OCI-LY7 (cell line): ENCODE measurements at regions of chr2 and their contacts with region 1.

Region 1: DNA sequence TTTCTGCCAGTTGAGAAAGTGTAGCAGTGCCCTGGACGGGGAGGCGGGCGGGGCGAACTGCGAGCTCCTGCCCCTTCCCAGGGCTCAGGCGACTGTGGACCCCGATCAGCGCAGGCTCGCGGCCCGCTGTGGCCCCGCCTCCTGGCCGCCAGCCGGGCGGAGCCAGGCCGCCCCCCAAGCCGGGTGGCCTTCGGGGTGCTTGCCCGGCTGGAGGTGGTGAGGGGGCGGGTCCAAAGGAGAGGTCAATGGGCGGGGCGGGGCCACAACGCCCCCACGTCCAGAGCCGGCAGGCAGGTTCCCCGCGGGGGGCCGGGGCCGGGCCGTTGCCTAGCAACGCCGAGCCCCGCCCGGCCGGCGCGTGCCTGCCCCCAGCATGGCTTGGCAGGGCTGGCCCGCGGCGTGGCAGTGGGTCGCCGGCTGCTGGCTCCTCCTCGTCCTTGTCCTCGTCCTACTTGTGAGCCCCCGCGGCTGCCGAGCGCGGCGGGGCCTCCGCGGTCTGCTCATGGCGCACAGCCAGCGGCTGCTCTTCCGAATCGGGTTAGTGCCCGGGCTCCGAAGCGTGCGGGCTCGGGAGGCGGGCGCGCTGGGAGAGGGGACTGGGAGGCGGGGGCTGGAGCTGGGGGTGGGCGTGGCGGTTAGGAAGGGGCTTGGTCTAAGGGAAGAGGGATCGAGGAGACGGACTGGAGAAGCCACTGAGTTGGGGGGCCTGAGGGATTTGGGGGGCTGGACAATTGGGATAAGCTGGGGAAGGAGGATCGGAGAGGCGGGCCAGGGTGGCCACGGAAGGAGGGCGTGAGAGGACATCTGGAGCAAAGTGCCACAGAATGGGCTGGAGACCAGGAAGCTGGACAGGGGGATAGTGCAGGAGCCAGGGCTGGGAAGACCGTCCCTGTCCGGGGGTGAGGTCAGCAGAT is 30.8 kb upstream of the TMBIM1 start:
- DNase-seq: peak; percentile 78
- H3K4me3 ChIP-seq: peak overlapping the region; percentile 76
- H3K27ac ChIP-seq: peak overlapping the region; percentile 59
- H3K4me1 ChIP-seq: peaks cover 76% of the 10 kb centered on the region
- CTCF ChIP-seq: no peak

Region 2: DNA sequence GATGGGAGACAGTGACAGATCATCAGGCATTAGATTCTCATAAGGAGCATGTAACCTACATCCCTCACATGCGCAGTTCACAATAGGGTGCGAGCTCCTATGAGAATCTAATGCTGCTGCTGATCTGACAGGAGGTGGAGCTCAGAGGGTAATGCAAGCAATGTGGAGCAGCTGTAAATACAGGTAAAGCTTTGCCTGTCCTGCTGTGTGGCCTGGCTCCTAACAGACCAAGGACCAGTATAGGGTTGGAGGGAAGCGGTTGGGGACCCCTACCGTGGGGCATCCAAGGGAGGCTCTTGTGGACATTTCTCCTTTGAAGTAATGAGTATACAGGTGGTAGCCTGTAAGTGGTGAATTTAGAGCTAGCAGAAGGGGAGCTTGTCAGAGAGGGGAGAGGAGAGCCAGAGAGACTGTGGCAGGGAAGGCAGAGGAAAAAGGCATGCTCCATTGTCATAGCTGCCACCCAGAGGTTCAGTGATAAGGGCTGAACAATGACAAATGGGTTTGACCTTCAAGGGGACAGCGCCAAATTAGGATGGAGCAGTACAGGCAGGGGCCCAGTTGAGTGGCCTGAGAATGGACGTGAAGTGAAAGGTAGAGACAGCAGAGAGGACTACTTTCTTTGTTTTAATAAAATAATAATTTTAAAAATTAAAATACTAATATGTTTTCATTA is 15.6 kb before region 1 on chr2:
- CTCF ChIA-PET with region 1: interaction called, 9 read pairs
- POLR2A ChIA-PET with region 1: interaction called, 10 read pairs
- intact Hi-C with region 1: no loop called
- DNase-seq: no peak
- H3K4me3 ChIP-seq: no peak overlapping the region
- H3K27ac ChIP-seq: no peak overlapping the region
- H3K4me1 ChIP-seq: peaks cover 27% of the 10 kb centered on the region
- CTCF ChIP-seq: no peak

Region 3: DNA sequence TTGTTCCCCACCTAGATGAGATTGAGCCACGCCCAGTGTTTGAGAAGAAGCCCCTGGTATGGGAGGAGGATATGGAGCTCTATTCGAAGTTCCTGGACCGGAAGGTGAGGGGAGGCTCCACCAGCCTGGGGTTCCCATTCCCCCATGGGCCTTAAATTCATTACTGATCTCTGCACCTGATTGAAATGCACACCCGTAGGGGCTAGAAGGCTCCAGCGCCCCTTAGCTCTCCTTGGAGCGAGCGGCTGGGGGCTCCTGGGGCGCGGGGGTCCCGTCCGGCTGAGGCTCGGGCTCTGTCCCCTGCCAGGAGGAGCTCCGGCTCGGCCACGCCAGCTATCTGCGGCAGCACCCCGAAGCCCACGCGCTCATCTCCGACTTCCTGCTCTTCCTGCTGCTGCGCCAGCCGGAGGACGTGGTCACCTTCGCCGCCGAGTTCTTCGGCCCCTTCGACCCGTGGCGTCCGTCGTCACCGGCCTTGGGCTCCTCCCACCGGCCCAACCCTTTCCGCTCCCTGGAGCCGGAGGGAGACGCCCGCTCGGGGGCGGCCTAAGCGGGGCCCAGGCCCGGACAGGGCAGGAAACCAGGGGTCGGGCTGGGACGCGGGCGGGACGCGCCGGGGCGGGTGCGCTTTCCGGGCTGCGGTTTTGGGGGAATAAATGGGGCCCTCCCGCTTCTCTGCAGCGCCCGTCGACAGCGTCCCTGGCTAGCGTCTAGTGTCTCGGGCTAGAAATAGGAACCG is 44.4 kb after region 1 on chr2:
- CTCF ChIA-PET with region 1: no interaction called
- POLR2A ChIA-PET with region 1: interaction called, 11 read pairs
- intact Hi-C with region 1: no loop called
- DNase-seq: peak; percentile 81
- H3K4me3 ChIP-seq: peak overlapping the region; percentile 68
- H3K27ac ChIP-seq: peak overlapping the region; percentile 40
- H3K4me1 ChIP-seq: peaks cover 66% of the 10 kb centered on the region
- CTCF ChIP-seq: peak; percentile 31; the same call in 1 of the 2 replicates

Region 4: DNA sequence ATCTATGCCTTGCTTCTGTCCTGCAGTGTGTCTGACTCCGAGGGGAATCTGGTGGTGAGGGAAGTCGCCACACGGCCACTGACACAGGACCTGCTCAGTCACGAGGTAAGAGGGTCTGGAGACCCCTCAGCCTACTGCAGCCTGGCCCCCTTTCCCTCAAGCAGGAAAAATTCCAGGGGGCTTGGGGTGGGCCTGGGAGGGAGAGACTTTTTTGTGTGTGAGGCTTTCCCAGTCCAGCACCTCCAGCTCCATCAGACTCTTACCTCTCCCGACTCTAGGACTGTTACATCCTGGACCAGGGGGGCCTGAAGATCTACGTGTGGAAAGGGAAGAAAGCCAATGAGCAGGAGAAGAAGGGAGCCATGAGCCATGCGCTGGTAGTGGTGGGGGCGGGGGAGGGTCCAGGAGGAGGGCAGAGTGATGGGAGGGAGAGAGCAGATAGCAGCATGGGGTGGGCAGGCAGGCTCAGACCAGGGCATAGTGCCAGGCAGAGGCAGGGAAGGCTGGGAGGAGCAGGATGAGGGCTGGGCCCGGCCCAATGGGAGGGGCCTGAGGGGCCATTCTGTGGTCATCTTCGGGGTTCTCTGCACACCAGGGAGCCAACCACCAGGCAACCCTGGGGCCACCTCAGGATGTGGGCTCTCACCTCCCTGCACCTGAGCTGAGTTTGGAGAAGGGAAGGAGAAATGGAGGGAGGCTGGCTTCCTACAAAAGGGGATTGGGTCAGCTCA is 106.6 kb after region 1 on chr2:
- CTCF ChIA-PET with region 1: no interaction called
- POLR2A ChIA-PET with region 1: no interaction called
- intact Hi-C with region 1: no loop called
- DNase-seq: no peak
- H3K4me3 ChIP-seq: no peak overlapping the region
- H3K27ac ChIP-seq: no peak overlapping the region
- H3K4me1 ChIP-seq: no peaks in the 10 kb centered on the region
- CTCF ChIP-seq: no peak

Region 5: DNA sequence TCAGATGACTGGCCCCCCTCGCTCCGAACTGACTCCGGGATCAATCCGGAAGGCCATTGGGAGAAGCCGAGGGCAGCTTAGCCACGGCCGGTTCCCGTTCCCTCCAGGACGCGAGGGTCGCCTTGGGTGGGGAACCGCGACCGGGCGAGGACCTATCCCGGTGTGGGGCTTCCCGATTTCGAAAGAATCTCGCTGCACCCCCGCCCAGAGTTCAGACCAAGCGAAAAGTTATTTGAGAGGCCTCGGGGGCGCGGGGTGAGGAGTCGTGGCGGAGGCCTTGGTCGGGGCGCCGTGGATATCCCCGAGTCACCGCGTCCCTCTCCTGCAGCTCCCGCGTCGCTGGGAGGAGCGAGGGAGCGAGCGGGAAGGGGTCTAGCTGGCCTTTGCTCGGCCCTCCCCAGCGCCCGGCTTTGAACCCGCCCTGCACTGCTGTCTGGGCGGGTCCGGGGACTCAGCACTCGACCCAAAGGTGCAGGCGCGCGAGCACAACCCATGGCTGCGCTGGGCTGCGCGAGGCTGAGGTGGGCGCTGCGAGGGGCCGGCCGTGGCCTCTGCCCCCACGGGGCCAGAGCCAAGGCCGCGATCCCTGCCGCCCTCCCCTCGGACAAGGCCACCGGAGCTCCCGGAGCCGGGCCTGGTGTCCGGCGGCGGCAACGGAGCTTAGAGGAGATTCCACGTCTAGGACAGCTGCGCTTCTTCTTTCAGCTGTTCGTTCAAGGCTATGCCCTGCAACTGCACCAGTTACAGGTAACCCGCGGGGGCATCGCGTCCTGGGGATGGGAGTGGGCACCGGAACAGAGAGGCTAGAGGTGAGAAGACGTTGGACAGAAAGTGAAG is 458.8 kb after region 1 on chr2 and contains the start of gene CYP27A1:
- CTCF ChIA-PET with region 1: no interaction called
- POLR2A ChIA-PET with region 1: no interaction called
- intact Hi-C with region 1: no loop called
- DNase-seq: no peak
- H3K4me3 ChIP-seq: no peak within 1 kb of the TSS
- H3K27ac ChIP-seq: no peak within 1 kb of the TSS
- H3K4me1 ChIP-seq: no peaks in the 10 kb centered on the region
- CTCF ChIP-seq: no peak
- total RNA-seq, gene CYP27A1: 0.15 TPM in 1 of 2 replicates, not detected in the other